Cardiac septum (tissue), 1 donor: ENCODE measurements at regions of chr11 and their contacts with region 1.

Region 1: DNA sequence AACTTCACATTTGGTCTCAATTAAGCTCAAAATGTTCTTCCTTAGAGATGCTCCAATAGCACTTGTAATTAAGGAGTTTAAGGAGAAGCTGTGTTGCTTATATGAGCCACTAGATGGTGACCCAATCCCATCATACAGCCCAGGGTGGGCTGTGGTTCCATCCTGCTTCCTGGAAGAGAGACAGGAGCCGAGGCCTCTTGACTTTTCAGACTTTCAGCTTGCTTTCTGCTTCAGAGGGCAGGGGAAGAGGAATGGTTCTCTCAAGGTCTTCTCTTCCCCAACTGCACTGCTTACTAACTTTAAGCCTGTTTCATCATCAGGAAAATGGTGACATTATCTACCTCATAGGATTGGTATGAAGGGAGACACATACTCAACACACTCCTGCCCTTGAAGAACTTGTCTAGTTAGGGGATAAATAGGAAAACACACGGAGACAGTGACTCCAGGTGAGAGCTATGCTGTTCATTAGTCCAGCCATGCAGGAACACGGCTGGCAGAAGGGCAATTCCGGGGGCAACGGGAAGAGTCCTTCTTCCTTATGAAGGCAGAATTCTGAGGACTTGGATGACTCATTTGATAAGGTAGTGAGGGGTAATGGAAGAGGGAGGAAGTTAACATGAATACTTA is 20.1 kb downstream of the TMEM218 start:
- DNase-seq: no peak

Region 2: GRCh38 chr11:125022551-125022950 is 68.8 kb before region 1 on chr11:
- intact Hi-C with region 1: no loop called
- DNase-seq: no peak

Region 3: DNA sequence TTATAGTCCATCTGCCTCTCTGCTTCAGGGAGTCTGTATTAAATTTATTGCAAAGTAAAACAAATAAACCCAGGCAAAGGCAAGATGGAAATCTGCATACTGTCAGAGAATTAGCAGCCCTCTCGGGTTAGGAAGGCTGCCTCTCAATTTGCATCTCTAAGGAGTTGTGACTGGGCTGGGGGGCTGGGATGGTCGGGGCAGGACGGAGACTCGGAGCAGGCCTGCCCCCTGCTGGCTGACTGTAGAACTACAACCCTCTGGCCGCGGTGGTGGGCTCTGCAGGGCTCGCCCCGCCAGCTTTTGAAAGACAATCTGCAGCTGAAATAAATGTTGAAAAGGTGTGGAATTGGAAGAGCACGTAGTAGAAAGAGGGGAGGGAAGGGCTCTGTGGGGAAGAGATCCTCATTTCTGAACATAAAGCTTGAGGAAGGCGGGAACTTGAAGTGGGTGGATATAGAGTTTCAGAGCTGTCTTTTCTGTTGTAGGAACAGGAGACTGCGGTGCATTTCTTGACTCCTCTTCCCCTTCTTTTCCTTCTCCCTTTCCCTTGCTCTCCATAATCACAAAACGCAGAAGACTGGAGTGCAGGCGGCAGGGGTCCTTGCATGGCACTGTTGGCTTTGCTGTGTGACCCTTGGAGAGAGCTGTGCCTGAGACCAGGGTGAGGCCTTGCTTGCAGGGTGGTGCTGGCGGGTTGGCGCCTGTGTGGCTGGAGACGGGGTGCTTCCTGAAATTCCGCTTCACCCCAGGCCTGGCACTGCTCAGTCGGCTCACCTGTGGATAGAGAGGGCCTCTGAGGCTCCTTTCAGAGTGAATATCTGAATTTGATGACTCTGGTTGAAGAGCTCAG is 50.5 kb after region 1 on chr11:
- intact Hi-C with region 1: loop called (anchors 5 kb)
- DNase-seq: no peak

Region 4: GRCh38 chr11:125345421-125346178 is 254.2 kb after region 1 on chr11:
- intact Hi-C with region 1: loop called (anchors 2 kb)
- DNase-seq: peak; percentile 87

Region 5: DNA sequence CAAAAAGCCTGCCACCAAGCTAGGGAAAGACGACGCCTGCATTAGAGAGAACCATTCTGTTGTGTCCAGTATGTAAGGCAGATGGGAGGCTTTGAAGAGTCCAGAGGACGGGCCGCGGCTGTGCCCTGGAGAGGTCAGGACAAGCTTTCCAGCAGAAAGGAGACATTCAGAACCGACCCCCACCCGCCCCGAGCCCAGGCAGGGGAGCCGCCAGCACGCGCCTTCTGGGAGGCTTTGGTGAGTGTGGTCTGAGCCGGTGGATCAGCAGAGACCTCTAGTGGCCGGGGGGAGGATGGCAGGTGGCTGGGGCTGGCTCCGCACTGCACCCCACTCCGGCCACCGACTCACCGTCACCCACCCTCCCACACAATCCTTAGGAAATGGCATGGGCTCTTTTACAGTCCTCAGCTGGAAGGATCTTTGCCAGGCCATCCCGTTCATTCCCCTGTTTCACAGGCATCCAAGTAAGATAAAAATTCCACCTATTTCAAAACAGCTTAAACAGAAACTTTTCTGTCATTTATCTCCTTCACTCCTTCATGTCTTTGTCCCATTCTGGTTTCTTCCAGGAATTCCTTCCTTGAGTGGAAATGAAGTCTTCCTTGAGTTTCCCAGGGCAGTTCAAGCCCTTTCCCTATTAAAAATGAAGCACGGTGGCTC is 313.5 kb after region 1 on chr11:
- intact Hi-C with region 1: loop called (anchors 5 kb)
- DNase-seq: peak; percentile 88

Region 6: DNA sequence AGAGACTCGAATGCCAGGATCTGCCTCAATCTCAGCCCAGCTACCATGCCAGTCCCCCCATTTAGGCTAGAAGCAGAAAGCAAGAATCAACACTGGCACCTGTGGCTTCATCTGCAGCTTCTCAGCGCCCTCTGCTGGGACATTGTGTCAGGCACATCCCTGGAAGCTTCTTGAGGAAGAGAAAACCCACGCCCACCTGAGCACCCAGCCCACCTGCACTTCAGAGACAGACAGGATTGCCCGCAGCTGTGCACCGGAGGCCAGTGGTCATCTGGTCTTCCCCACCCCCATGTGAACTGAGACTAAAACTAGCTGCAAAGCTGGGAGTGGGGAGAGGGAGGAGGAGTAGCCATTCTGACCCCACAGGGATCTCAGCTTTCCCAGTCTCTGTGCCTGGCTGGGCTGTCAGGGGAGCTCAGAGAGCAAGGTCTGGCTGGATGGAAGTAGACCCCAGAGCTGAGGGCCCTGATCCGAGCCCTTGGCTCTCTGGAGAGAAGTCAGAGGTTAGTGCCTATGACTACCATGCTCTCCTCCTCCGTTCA is 337.9 kb after region 1 on chr11:
- intact Hi-C with region 1: loop called (anchors 2 kb)
- DNase-seq: peak; percentile 75